Activated CD4-positive, alpha-beta T cell treated with anti-CD3 and anti-CD28 coated beads, Interleukin-2, amount 10 ng/mL, durations not matched to agents 24 days and 14 days (primary cell): ENCODE measurements at regions of chr4 and their contacts with region 1.

Region 1: DNA sequence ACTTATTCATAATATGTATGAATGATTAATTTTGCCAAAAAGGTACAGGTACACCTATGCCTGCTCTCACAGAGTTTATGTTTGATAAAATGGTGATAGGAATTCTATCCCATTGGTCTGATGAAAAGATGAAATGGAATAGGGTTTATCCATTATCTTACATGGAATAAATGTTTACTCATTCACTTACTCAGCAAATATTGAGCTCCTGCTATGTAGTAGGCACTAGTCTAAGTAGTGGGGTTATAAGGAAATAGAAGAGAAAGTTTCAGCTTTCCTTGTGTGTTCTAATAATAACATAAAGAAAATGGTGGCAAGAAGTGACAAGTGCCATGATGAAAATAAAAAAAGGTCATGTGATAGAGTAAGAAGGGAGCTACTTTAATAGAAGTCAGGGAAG is 12.4 kb upstream of the SLC10A7 start:
- DNase-seq: no peak
- H3K4me3 Mint-ChIP-seq: no peak overlapping the region
- H3K27ac Mint-ChIP-seq: no peak overlapping the region
- H3K4me1 Mint-ChIP-seq: no peaks in the 10 kb centered on the region
- H3K27me3 Mint-ChIP-seq: peaks cover 10% of the 10 kb centered on the region

Region 2: DNA sequence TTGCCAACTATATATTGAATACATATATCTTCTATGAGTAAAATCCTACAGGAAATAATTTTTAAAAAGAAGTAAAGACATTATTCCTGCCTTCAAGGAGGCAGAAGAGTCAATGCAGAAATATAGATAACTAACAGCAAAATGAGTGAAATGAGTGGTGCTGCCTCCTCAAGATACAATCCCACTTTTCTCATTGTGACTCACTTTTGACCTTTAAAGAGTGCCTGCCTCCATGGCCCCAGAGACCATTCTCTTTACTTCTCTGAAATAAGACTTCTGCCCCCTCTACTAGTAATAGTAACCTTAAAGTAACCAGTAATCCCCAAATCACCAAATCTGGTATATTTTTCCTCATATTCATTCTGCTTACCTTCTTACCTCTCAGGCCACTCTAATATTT is 27.9 kb before region 1 on chr4:
- intact Hi-C with region 1: loop called (anchors 1 kb)
- DNase-seq: no peak
- H3K4me3 Mint-ChIP-seq: no peak overlapping the region
- H3K27ac Mint-ChIP-seq: peak overlapping the region; percentile 54
- H3K4me1 Mint-ChIP-seq: peaks cover 17% of the 10 kb centered on the region
- H3K27me3 Mint-ChIP-seq: no peaks in the 10 kb centered on the region

Region 3: GRCh38 chr4:146592019-146592418 is 57.8 kb after region 1 on chr4:
- intact Hi-C with region 1: no loop called
- DNase-seq: no peak
- H3K4me3 Mint-ChIP-seq: no peak overlapping the region
- H3K27ac Mint-ChIP-seq: no peak overlapping the region
- H3K4me1 Mint-ChIP-seq: no peaks in the 10 kb centered on the region
- H3K27me3 Mint-ChIP-seq: no peaks in the 10 kb centered on the region

Region 4: DNA sequence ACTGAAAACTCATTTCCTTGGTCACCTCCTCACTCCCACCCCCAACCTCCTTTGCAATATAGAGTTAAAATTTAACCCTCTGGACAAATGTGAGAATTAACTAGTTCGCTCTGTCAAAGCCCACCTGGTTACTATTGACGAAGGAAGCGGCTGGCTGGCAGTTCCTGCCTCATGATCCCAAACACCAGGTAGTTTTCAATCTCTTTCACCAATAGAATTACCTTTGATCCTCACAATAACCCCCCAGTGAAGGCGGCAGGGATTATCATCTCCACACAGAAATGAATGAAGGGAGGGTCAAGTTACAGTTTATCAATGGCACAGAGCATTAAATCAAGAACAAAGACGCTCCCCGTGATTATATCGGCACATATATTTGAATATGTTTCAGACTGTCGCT is 477.2 kb after region 1 on chr4:
- intact Hi-C with region 1: no loop called
- DNase-seq: no peak
- H3K4me3 Mint-ChIP-seq: no peak overlapping the region
- H3K27ac Mint-ChIP-seq: no peak overlapping the region
- H3K4me1 Mint-ChIP-seq: no peaks in the 10 kb centered on the region
- H3K27me3 Mint-ChIP-seq: peaks cover 2% of the 10 kb centered on the region